K562 (cell line): ENCODE measurements at regions of chr2 and their contacts with region 1.

Region 1: DNA sequence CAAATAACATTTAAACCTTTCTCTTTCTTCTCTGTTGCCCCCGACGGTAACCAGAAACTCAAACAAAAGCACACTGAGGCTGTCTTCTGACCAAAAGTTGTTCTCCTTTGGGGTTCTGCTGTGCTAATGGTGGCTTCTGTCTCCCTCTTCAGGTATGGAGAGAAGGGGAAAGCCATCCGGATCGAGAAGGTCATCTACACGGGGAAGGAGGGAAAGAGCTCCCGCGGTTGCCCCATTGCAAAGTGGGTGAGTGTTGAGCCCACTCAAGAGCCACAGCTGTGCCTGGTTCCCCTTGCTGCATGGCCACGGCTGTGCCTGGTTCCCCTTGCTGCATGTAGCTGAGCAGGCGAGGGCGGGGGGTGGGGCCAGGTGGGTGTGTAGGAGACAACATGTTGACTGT is 67.4 kb downstream of the BOLA3 start:
- DNase-seq: peak in 2 of 4 experiments; percentile 32 to 37
- ATAC-seq: peak; percentile 21
- H3K4me3 ChIP-seq: no peak overlapping the region
- H3K27ac ChIP-seq: no peak overlapping the region
- H3K4me1 ChIP-seq: peaks cover 37 to 44% of the 10 kb centered on the region in 2 experiments
- H3K27me3 ChIP-seq: no peaks in the 10 kb centered on the region
- CTCF ChIP-seq: peak; percentile 40 to 60 (median 50); a peak in 5 of 6 replicates
- EP300 ChIP-seq: no peak
- POLR2A ChIP-seq: no peak
- RAD21 ChIP-seq: peak; percentile 37 to 70

Region 2: DNA sequence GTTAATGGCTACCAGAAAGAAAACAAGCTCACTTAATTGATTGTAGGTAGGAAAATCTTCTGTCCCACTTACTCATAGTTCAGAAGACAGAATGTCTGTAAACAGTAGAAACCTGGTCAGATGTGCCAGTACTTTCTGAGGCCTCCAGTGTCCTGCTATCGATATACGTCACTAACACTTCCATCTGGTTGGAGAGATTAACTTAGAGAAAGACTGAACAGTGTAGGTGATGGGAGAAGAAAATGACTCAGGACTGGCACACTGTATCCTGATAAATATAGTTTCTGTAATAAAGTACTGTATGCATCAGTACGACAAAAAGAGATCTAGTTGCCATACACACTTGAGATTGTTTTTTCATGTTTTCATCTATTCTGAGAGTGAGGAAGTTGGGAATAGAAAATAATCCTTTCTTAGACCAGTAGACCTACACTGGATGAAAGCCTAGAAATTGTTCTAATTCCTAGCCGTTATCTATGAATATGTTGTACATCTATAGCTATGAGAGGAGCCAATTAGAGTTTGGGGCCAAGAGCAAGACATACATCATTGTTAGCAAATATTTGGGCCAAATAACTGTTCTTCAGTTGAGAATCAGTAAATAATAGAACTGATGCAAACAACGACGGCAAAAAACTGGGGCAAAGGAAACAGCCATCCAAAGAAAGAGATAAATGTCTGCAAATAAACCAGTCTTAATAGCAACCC is 544.1 kb before region 1 on chr2:
- CTCF ChIA-PET with region 1: no interaction called
- POLR2A ChIA-PET with region 1: no interaction called
- in situ Hi-C with region 1: no loop called
- intact Hi-C with region 1: no loop called
- DNase-seq: no peak
- ATAC-seq: no peak
- H3K4me3 ChIP-seq: no peak overlapping the region
- H3K27ac ChIP-seq: no peak overlapping the region
- H3K4me1 ChIP-seq: no peaks in the 10 kb centered on the region
- H3K27me3 ChIP-seq: no peaks in the 10 kb centered on the region
- CTCF ChIP-seq: no peak
- EP300 ChIP-seq: no peak
- POLR2A ChIP-seq: no peak
- RAD21 ChIP-seq: no peak

Region 3: DNA sequence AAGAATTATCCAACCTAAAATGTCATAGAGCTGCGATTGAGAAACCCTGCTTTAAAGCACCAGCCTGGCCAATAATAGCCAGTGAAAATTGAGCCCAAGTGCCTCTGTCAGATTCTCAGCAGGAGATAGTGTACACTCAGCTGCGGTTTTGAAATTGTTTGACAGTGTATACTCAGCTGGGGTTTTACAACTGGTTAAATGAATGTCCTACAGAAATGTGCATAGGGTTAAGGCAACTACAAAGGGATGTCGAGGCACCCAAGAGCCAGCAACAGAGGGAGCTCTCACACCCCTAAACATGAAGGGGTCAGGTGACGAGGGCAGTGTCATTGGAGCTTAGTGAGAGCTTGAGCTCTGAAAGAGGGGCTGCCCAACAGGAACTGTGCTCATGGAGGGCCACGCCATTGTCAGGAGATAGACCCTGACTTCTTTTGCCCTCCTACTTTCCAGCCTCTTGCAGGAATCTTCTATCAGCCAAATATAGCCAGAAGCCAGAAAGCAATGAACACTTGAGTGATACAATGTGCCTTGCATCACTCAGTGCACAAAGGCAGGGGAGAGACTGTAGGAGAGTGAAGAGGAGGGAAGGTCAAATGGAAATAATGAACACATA is 172.4 kb before region 1 on chr2:
- CTCF ChIA-PET with region 1: no interaction called
- POLR2A ChIA-PET with region 1: no interaction called
- in situ Hi-C with region 1: no loop called
- intact Hi-C with region 1: loop called (anchors 2 kb)
- DNase-seq: peak in 3 of 4 experiments; percentile 27 to 73 (median 63)
- ATAC-seq: peak; percentile 97
- H3K4me3 ChIP-seq: no peak overlapping the region
- H3K27ac ChIP-seq: no peak overlapping the region
- H3K4me1 ChIP-seq: no peaks in the 10 kb centered on the region; a peak in 1 of 5 replicates
- H3K27me3 ChIP-seq: no peaks in the 10 kb centered on the region
- CTCF ChIP-seq: peak; percentile 69 to 78 (median 73)
- EP300 ChIP-seq: no peak
- POLR2A ChIP-seq: no peak
- RAD21 ChIP-seq: peak; percentile 68 to 87

Region 4: GRCh38 chr2:74031221-74031620 is 49.1 kb before region 1 on chr2:
- CTCF ChIA-PET with region 1: no interaction called
- POLR2A ChIA-PET with region 1: interaction called, 3 read pairs
- in situ Hi-C with region 1: no loop called
- intact Hi-C with region 1: loop called (anchors 5 kb)
- DNase-seq: no peak
- ATAC-seq: no peak
- H3K4me3 ChIP-seq: no peak overlapping the region
- H3K27ac ChIP-seq: no peak overlapping the region
- H3K4me1 ChIP-seq: peaks cover 25 to 59% of the 10 kb centered on the region in 2 experiments
- H3K27me3 ChIP-seq: no peaks in the 10 kb centered on the region
- CTCF ChIP-seq: no peak
- EP300 ChIP-seq: no peak
- POLR2A ChIP-seq: no peak
- RAD21 ChIP-seq: no peak

Region 5: GRCh38 chr2:74048843-74049519 is 31.4 kb before region 1 on chr2:
- CTCF ChIA-PET with region 1: no interaction called
- POLR2A ChIA-PET with region 1: interaction called, 3 read pairs
- in situ Hi-C with region 1: no loop called
- intact Hi-C with region 1: loop called (anchors 1 kb)
- DNase-seq: peak; percentile 86 to 97 (median 92)
- ATAC-seq: peak; percentile 95
- H3K4me3 ChIP-seq: no peak overlapping the region; the same call in 1 of the 2 replicates
- H3K27ac ChIP-seq: peak overlapping the region; percentile 95
- H3K4me1 ChIP-seq: peaks cover 41 to 57% of the 10 kb centered on the region in 2 experiments
- H3K27me3 ChIP-seq: no peaks in the 10 kb centered on the region
- CTCF ChIP-seq: peak in 2 of 3 experiments; percentile 35 to 42; a peak in 5 of 6 replicates
- EP300 ChIP-seq: peak; percentile 84
- POLR2A ChIP-seq: peak; percentile 71
- RAD21 ChIP-seq: peak; percentile 38 to 66

Region 6: GRCh38 chr2:74317701-74318301 is 237.5 kb after region 1 on chr2:
- CTCF ChIA-PET with region 1: no interaction called
- POLR2A ChIA-PET with region 1: no interaction called
- in situ Hi-C with region 1: no loop called
- intact Hi-C with region 1: no loop called
- DNase-seq: no peak
- ATAC-seq: no peak
- H3K4me3 ChIP-seq: no peak overlapping the region
- H3K27ac ChIP-seq: no peak overlapping the region
- H3K4me1 ChIP-seq: peaks cover 0 to 23% of the 10 kb centered on the region in 2 experiments; a peak in 3 of 5 replicates
- H3K27me3 ChIP-seq: no peaks in the 10 kb centered on the region
- CTCF ChIP-seq: no peak
- EP300 ChIP-seq: no peak
- POLR2A ChIP-seq: no peak
- RAD21 ChIP-seq: no peak